T-cell (primary cell): ENCODE measurements at regions of chr13 and their contacts with region 1.

Region 1: DNA sequence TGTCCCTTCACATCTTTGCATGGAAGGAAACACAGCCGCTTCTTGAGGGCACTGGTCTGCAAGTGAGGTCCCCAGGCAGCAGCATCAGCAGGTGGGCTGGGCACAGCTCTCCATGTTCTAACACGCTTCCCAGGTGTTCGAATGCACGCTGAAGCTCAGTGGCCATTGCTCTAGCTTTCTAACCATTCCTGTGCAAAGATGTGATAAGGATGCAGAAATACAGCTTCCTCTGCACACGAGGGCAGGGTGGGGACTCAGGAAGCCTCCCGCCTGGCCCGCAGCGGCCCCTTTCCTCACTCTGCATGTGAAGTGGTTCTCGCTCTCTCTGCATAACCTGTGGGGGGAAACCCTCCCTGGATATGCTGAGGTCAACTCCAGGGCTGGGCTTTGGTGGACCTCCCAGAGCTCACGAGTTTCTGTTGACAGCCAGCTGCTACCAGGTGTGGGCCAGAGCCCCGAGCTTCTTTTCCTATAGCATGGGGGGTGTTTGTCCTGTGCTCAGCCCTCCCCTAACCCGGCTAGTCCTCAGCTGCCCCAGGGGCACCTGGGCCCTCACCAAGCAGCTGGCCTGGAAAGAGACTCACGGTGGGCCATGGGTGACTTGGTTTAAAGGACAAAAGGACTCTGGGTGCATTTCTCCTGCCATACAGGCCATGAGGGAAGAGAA is 168.2 kb downstream of the TEX29 start:
- DNase-seq: peak in 1 of 35 experiments; percentile 19
- ATAC-seq: no peak
- H3K4me3 ChIP-seq: no peak overlapping the region
- H3K4me3 Mint-ChIP-seq: no peak overlapping the region
- H3K27ac ChIP-seq: no peak overlapping the region
- H3K27ac Mint-ChIP-seq: no peak overlapping the region
- H3K4me1 ChIP-seq: no peaks in the 10 kb centered on the region
- H3K4me1 Mint-ChIP-seq: no peaks in the 10 kb centered on the region
- H3K27me3 ChIP-seq: peaks cover 0 to 17% of the 10 kb centered on the region in 2 experiments
- H3K27me3 Mint-ChIP-seq: peaks cover 0 to 4% of the 10 kb centered on the region in 2 donors

Region 2: GRCh38 chr13:111380431-111380830 is 108.2 kb before region 1 on chr13:
- CTCF ChIA-PET with region 1: no interaction called
- POLR2A ChIA-PET with region 1: interaction called in 1 of 2 experiments, 10 read pairs
- DNase-seq: no peak
- ATAC-seq: no peak
- H3K4me3 ChIP-seq: no peak overlapping the region
- H3K4me3 Mint-ChIP-seq: no peak overlapping the region
- H3K27ac ChIP-seq: no peak overlapping the region
- H3K27ac Mint-ChIP-seq: no peak overlapping the region
- H3K4me1 ChIP-seq: peaks cover 17 to 19% of the 10 kb centered on the region in 2 experiments
- H3K4me1 Mint-ChIP-seq: peaks cover 19 to 32% (median 22%) of the 10 kb centered on the region in 3 donors
- H3K27me3 ChIP-seq: peaks cover 0 to 23% of the 10 kb centered on the region in 2 experiments
- H3K27me3 Mint-ChIP-seq: peaks cover 0 to 5% of the 10 kb centered on the region in 2 donors